ENCODE measurements at regions of chr20 and their contacts with region 1.

Region 1: GRCh38 chr20:40741507-40742106 is 52.6 kb upstream of the MAFB start:
- DNase-seq: peak; percentile 67
- ATAC-seq: no peak
- H3K4me3 Mint-ChIP-seq: no peak overlapping the region
- H3K27ac Mint-ChIP-seq: no peak overlapping the region
- H3K4me1 Mint-ChIP-seq: no peaks in the 10 kb centered on the region
- H3K27me3 Mint-ChIP-seq: peaks cover 3% of the 10 kb centered on the region

Region 2: GRCh38 chr20:40724566-40724965 is 17.0 kb before region 1 on chr20:
- CTCF ChIA-PET with region 1: interaction called, 19 read pairs
- POLR2A ChIA-PET with region 1: no interaction called
- intact Hi-C with region 1: no loop called
- DNase-seq: no peak
- ATAC-seq: no peak
- H3K4me3 Mint-ChIP-seq: no peak overlapping the region
- H3K27ac Mint-ChIP-seq: no peak overlapping the region
- H3K4me1 Mint-ChIP-seq: no peaks in the 10 kb centered on the region
- H3K27me3 Mint-ChIP-seq: peaks cover 5% of the 10 kb centered on the region

Region 3: GRCh38 chr20:40945754-40946450 is 204.3 kb after region 1 on chr20:
- CTCF ChIA-PET with region 1: interaction called, 9 read pairs
- POLR2A ChIA-PET with region 1: no interaction called
- intact Hi-C with region 1: loop called (anchors 1 to 5 kb)
- DNase-seq: peak; percentile 45
- ATAC-seq: no peak
- H3K4me3 Mint-ChIP-seq: no peak overlapping the region
- H3K27ac Mint-ChIP-seq: no peak overlapping the region
- H3K4me1 Mint-ChIP-seq: no peaks in the 10 kb centered on the region
- H3K27me3 Mint-ChIP-seq: peaks cover 3% of the 10 kb centered on the region

Region 4: GRCh38 chr20:41169781-41170351 is 428.3 kb after region 1 on chr20:
- CTCF ChIA-PET with region 1: no interaction called
- POLR2A ChIA-PET with region 1: no interaction called
- intact Hi-C with region 1: no loop called
- DNase-seq: peak; percentile 4
- ATAC-seq: no peak
- H3K4me3 Mint-ChIP-seq: no peak overlapping the region
- H3K27ac Mint-ChIP-seq: peak overlapping the region; percentile 45
- H3K4me1 Mint-ChIP-seq: peaks cover 18% of the 10 kb centered on the region
- H3K27me3 Mint-ChIP-seq: no peaks in the 10 kb centered on the region

Measured in activated CD4-positive, alpha-beta T cell treated with anti-CD3 and anti-CD28 coated beads for 36 hours (primary cell).